PC-3 (cell line): ENCODE measurements at regions of chr16 and their contacts with region 1.

Region 1: DNA sequence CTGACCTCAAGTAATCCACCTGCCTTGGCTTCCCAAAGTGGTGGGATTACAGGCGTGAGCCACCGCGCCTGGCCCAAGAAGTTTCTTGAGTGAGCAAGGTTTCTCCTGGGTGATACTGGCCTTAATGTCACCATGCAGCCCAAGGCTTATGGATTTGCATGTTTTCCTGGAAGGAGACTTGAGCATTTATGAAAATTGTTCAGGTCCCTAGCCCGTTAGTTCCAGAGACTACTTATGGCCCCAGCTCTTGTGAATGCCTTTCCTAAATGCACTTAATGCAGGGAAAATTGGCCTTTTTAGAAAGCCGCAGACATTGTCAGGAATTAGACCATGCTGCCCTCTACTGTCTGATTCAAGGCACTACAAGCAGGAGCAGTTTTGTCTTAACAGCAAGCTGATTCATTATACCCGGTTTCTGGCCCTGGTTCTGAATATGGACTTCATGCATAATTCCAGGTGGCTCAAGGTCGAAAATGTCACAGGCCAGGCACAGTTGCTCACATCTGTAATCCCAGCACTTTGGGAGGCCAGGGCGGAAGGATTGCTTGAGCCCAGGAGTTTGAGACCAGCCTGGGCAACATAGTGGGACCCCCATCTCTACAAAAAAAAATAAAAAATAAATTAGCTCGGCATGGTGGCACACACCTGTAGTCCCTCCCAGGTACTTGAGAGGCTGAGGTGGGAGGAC is 91.3 kb downstream of the SNX29 start:
- DNase-seq: peak; percentile 74
- ATAC-seq: peak; percentile 70
- H3K4me3 ChIP-seq: no peak overlapping the region
- H3K27ac ChIP-seq: no peak overlapping the region
- H3K4me1 ChIP-seq: peaks cover 2% of the 10 kb centered on the region
- H3K27me3 ChIP-seq: no peaks in the 10 kb centered on the region
- CTCF ChIP-seq: peak; percentile 81

Region 2: DNA sequence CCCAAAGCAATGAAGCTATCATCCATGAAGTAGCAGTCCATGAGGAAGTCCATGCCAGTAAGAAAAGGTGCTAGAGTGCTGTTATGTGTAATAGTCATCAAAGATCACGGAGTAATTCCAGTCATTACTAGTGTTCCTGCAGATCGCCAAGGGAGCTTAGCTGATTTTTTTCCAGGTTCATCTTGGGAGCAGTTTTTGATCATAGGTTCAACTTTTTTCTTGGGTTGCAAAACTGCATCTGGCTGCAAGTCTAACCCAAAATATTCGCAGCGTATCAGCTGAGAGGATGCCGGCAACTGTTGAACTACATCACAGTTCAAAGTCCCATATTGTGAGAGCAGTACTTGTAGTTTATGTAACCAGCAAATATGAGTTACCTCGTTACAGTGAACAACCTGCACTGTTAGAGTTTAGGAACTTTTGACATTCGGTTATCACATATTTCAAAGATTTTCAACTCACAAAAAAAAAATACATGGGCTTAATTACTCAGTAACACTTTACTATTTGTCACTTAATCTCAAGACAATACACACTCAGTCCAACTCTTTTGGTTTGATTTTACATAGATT is 198.1 kb before region 1 on chr16:
- CTCF ChIA-PET with region 1: no interaction called
- POLR2A ChIA-PET with region 1: no interaction called
- intact Hi-C with region 1: loop called (anchors 5 kb)
- DNase-seq: no peak
- ATAC-seq: no peak
- H3K4me3 ChIP-seq: no peak overlapping the region
- H3K27ac ChIP-seq: no peak overlapping the region
- H3K4me1 ChIP-seq: peaks cover 16% of the 10 kb centered on the region
- H3K27me3 ChIP-seq: no peaks in the 10 kb centered on the region
- CTCF ChIP-seq: no peak

Region 3: DNA sequence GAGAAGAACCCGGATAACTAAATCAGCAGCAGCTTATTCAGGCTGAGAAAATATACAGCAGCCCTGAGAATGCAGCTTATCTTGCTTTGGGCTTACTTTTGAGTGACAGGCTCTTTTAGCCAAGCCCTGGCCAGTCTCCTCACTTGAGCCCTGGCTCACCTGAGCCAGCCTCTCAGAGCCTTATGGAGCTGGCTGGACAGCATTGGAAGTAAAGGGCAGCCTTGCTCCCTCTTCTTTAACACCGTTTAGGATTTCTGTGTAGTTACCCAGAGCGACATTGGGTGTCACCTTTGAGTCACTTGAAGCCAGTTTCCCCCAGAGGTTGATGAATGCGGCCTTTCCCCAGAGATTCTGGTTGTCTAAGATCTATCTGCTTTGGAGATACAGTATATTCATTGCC is 118.3 kb before region 1 on chr16:
- CTCF ChIA-PET with region 1: interaction called, 11 read pairs
- POLR2A ChIA-PET with region 1: no interaction called
- intact Hi-C with region 1: loop called (anchors 1 kb)
- DNase-seq: peak; percentile 68
- ATAC-seq: peak; percentile 95
- H3K4me3 ChIP-seq: no peak overlapping the region
- H3K27ac ChIP-seq: no peak overlapping the region
- H3K4me1 ChIP-seq: no peaks in the 10 kb centered on the region
- H3K27me3 ChIP-seq: no peaks in the 10 kb centered on the region
- CTCF ChIP-seq: peak; percentile 62

Region 4: GRCh38 chr16:11972128-11972527 is 95.7 kb before region 1 on chr16:
- CTCF ChIA-PET with region 1: interaction called, 6 read pairs
- POLR2A ChIA-PET with region 1: no interaction called
- intact Hi-C with region 1: loop called (anchors 1 kb)
- DNase-seq: peak; percentile 23
- ATAC-seq: no peak
- H3K4me3 ChIP-seq: no peak overlapping the region
- H3K27ac ChIP-seq: no peak overlapping the region
- H3K4me1 ChIP-seq: no peaks in the 10 kb centered on the region
- H3K27me3 ChIP-seq: no peaks in the 10 kb centered on the region
- CTCF ChIP-seq: peak; percentile 41; the same call in 1 of the 2 replicates

Region 5: DNA sequence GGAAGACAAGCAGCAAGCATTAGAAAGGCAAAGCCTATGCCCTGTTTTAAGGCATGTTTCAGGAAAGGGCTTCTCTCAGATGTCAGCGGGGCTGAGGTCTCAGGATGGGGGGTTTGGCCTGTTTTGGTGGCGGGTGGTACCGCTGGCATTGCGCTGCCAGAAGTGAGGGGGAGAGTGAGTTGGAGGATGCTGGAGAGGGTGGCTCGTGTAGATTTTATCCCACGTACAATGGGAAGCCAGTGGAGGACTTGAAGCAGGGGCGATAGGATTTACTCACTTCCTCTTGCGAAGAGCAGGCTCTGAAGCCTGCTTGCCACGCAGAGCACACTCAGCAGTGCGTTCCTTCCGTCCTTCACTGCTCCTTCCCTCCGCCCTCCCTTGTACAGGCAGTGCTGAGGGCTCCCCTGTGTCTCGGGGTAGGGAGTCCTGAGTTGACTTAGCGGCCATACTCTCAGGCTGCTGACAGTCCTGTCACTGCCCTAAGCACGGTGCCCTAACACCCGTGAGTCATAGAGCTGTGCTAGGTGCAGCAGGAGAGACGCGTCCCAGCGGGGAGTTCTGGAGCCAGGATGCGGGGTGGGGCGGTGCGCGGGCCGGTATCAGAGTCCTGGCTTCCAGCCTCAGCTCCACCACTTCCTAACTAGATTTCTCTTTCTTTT is 21.8 kb after region 1 on chr16:
- CTCF ChIA-PET with region 1: interaction called, 10 read pairs
- POLR2A ChIA-PET with region 1: no interaction called
- intact Hi-C with region 1: no loop called
- DNase-seq: no peak
- ATAC-seq: no peak
- H3K4me3 ChIP-seq: no peak overlapping the region
- H3K27ac ChIP-seq: no peak overlapping the region
- H3K4me1 ChIP-seq: peaks cover 11% of the 10 kb centered on the region
- H3K27me3 ChIP-seq: no peaks in the 10 kb centered on the region
- CTCF ChIP-seq: no peak

Region 6: DNA sequence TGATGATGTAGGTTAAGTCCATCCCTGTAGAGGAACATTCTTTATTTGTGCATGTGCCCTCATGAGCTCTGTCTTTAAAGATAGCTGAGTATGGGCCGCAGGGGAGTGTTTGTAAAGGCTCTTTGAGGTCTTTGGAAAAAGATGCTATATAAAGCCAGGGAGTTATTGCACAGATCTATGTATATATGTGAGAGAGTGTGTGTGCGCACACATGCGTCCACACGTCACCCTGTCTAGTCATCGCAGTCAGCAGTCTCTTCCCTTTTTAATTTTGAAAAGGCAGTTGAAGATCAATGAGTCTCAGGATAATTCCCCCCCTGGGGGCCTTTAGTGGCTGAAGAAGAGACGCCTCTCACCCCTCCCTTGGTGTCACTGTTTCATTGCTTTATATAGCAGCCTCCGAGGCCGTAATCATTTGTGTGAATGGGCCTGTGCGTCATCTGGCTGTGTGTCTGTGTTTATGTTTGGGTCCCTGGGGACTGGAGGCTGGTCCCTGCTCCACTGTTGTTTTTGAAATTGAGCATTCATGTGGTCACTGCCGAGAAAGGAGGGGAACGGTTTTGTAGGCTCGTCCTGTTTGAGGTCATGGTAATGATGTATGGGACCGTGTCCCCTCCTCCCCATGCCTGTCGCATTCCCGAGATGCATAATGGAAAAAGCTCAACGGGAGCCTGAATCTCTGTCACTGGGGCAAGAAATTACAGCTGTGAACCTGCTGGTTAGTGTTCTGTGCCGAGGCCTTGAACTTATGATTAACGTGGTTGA is 52.5 kb after region 1 on chr16:
- CTCF ChIA-PET with region 1: no interaction called
- POLR2A ChIA-PET with region 1: no interaction called
- intact Hi-C with region 1: no loop called
- DNase-seq: no peak
- ATAC-seq: no peak
- H3K4me3 ChIP-seq: no peak overlapping the region
- H3K27ac ChIP-seq: no peak overlapping the region
- H3K4me1 ChIP-seq: peaks cover 12% of the 10 kb centered on the region
- H3K27me3 ChIP-seq: no peaks in the 10 kb centered on the region
- CTCF ChIP-seq: no peak